ENCODE measurements at regions of chr3 and their contacts with region 1.

Region 1: GRCh38 chr3:192444096-192444790 is 283.1 kb downstream of the FGF12 start:
- DNase-seq: peak; percentile 65
- ATAC-seq: peak; percentile 69
- H3K4me3 Mint-ChIP-seq: no peak overlapping the region
- H3K27ac Mint-ChIP-seq: no peak overlapping the region
- H3K4me1 Mint-ChIP-seq: no peaks in the 10 kb centered on the region
- H3K27me3 Mint-ChIP-seq: peaks cover 4% of the 10 kb centered on the region

Region 2: DNA sequence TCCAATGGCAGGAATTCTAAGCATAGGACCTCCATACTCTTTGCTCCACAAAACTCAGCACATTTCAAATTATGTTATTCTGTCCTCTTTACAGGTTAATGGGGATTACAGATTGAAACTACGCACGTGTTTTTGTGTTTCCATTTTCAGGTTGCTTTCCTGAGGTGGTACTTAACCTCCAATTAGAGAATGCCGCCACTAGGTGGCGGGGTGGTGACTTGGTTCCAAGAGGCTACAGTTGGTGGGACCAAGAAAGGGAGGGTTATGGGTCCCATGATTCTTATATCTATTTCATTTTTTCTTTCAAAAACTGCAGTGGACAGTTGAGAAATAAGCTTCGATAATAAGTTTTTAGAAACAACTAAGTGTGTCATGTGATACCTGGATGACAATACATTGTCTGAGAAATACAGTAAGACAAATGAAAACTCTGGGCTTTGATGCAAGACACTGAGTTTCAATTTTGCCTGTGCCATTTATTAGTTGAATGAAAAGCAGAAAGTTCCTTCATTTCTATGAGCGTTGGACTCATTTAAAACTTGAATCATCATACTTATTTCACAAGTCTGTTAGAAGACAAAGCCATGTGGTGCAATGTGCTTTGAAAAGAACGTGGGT is 255.9 kb before region 1 on chr3:
- CTCF ChIA-PET with region 1: interaction called, 20 read pairs
- POLR2A ChIA-PET with region 1: no interaction called
- DNase-seq: peak; percentile 61
- ATAC-seq: peak; percentile 69
- H3K4me3 Mint-ChIP-seq: no peak overlapping the region
- H3K27ac Mint-ChIP-seq: no peak overlapping the region
- H3K4me1 Mint-ChIP-seq: no peaks in the 10 kb centered on the region
- H3K27me3 Mint-ChIP-seq: no peaks in the 10 kb centered on the region

Region 3: DNA sequence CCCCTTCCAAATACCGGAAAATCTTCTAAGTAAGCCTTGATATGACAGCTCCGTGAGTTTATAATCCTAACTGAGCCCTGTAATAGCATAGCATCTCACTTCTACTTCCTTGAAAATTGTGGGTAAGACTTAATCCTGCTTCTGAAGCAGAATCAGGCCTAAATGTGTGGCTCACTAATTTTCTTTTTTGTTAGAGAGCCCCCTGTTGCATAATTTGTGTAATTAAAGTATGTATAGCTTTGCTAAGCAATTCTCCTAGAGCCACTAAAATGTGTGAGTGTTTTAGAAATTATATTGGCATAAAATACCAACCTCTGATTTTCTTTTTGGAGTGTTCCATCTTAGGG is 21.3 kb before region 1 on chr3:
- CTCF ChIA-PET with region 1: interaction called, 11 read pairs
- POLR2A ChIA-PET with region 1: no interaction called
- DNase-seq: no peak
- ATAC-seq: no peak
- H3K4me3 Mint-ChIP-seq: no peak overlapping the region
- H3K27ac Mint-ChIP-seq: no peak overlapping the region
- H3K4me1 Mint-ChIP-seq: no peaks in the 10 kb centered on the region
- H3K27me3 Mint-ChIP-seq: no peaks in the 10 kb centered on the region